ENCODE measurements at regions of chr1 and their contacts with region 1.

Region 1: GRCh38 chr1:75373533-75374320 is 237.2 kb downstream of the SLC44A5 start:
- DNase-seq: no peak
- ATAC-seq: no peak
- H3K4me3 Mint-ChIP-seq: no peak overlapping the region
- H3K27ac Mint-ChIP-seq: no peak overlapping the region
- H3K4me1 Mint-ChIP-seq: peaks cover 41% of the 10 kb centered on the region
- H3K27me3 Mint-ChIP-seq: peaks cover 4% of the 10 kb centered on the region; the same call in 1 of the 2 replicates
- CTCF ChIP-seq: no peak

Region 2: DNA sequence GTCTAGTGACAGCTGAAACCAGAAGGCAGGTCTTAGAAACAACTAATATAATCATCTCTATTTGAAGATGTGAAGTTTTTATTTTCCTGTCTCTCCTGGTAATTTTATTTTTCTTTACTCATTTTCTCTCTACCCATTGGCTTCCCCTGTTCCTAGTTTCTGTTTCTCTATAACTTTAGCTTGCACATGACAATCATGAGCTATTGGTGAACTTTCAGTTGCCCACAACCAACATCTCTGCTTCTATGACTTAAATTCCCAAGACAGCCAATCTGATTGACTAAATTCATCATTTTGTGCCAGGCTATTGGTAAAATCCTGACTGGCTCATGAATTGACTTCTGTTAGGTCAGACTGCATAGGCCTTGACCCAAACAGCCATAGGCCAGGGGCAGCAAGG is 337.1 kb after region 1 on chr1:
- CTCF ChIA-PET with region 1: no interaction called
- POLR2A ChIA-PET with region 1: interaction called, 12 read pairs
- DNase-seq: no peak
- ATAC-seq: no peak
- H3K4me3 Mint-ChIP-seq: no peak overlapping the region
- H3K27ac Mint-ChIP-seq: no peak overlapping the region
- H3K4me1 Mint-ChIP-seq: no peaks in the 10 kb centered on the region
- H3K27me3 Mint-ChIP-seq: no peaks in the 10 kb centered on the region
- CTCF ChIP-seq: no peak

Measured in WTC11 (cell line).